GM12878 (cell line): ENCODE measurements at regions of chr2 and their contacts with region 1.

Region 1: DNA sequence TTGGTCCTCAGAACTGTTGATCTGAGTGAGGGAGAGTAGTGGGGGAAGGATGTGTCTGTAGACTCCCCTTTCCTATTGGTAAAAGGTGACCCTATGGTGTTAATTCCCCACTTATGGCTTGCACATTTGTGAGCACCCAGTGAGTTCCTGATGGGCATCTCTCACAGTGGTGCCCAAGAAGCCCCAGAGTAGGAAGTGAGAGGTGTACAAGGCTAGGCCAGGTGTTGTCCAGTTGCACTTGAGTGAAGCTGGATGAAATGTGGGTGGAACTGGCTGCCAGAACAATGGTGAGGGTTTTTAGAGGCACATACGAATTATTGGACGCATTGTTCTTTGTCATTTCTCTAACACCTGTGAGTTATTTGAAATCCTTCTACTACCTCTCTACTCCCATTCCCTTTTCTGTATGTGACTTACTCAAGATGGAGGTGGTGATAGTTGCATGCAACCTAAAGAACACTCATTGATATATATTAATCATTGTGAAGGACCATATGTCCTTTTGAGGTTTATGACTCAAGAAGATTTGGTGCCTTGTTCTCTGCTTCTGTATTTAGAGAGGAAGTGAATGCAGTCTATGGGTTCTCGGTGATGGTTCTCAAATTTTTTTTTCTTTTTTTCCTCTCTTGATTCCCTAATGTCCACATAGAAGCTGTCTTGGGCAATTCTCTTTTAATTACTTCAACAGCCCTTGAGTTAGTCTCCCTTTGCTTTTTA is 162.7 kb downstream of the FSHR start:
- DNase-seq: no peak
- ATAC-seq: peak; percentile 71
- H3K4me3 ChIP-seq: no peak overlapping the region
- H3K27ac ChIP-seq: no peak overlapping the region
- H3K4me1 ChIP-seq: peaks cover 22% of the 10 kb centered on the region; the same call in 1 of the 2 replicates
- H3K27me3 ChIP-seq: no peaks in the 10 kb centered on the region
- CTCF ChIP-seq: no peak
- EP300 ChIP-seq: no peak
- POLR2A ChIP-seq: no peak
- RAD21 ChIP-seq: no peak

Region 2: GRCh38 chr2:48978131-48978530 is 13.4 kb before region 1 on chr2:
- CTCF ChIA-PET with region 1: no interaction called
- POLR2A ChIA-PET with region 1: no interaction called
- RAD21 ChIA-PET with region 1: no interaction called
- SMC1A ChIA-PET with region 1: no interaction called
- in situ Hi-C with region 1: no loop called
- intact Hi-C with region 1: no loop called
- DNase-seq: no peak
- ATAC-seq: no peak
- H3K4me3 ChIP-seq: no peak overlapping the region
- H3K27ac ChIP-seq: no peak overlapping the region
- H3K4me1 ChIP-seq: no peaks in the 10 kb centered on the region
- H3K27me3 ChIP-seq: no peaks in the 10 kb centered on the region
- CTCF ChIP-seq: no peak
- EP300 ChIP-seq: no peak
- POLR2A ChIP-seq: no peak
- RAD21 ChIP-seq: no peak

Region 3: GRCh38 chr2:49028101-49028500 is 36.5 kb after region 1 on chr2:
- CTCF ChIA-PET with region 1: no interaction called
- POLR2A ChIA-PET with region 1: no interaction called
- RAD21 ChIA-PET with region 1: interaction called, 4 read pairs
- SMC1A ChIA-PET with region 1: no interaction called
- in situ Hi-C with region 1: no loop called
- intact Hi-C with region 1: loop called (anchors 2 kb)
- DNase-seq: peak; percentile 47
- ATAC-seq: peak; percentile 99
- H3K4me3 ChIP-seq: no peak overlapping the region
- H3K27ac ChIP-seq: no peak overlapping the region
- H3K4me1 ChIP-seq: no peaks in the 10 kb centered on the region
- H3K27me3 ChIP-seq: no peaks in the 10 kb centered on the region
- CTCF ChIP-seq: no peak
- EP300 ChIP-seq: peak; percentile 58 to 86; a peak in 3 of 4 replicates
- POLR2A ChIP-seq: no peak
- RAD21 ChIP-seq: no peak